ENCODE measurements at regions of chr2 and their contacts with region 1.

Region 1: DNA sequence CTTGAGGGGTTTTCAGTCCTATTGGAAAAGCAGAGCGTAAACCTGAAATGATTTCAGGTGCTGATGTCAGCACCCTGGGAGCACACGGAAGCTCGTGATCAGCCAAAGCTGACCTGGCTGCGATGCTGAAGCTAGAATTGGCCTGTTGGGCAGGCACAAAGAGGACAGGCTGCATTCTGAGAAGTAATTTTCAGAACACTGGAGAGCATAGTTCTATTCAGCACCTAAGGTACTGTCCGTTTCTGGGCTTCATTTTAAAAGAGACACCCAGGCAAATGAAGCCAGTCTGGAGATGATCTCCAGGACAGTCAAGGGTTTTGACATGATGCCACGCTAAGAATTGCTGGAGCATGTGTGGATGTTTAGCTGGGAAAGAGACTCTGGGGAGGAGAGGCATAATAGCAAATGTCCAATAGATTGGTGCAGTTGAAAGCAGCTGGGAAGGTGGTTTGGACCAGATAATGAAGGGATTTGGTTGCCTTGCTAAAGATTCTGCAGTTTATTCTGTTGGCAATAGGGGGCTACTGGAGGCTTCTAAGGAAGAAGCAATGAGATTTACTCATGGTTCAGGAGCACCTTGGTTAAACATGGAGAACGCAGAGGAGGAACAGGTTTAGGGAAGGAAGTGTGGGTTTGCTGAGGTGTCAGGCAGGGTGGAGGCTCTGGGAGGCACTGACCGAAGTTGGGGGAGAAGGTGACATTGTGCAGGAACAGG is 86.6 kb downstream of the ACOXL start:
- DNase-seq: no peak
- ATAC-seq: no peak
- H3K4me3 ChIP-seq: no peak overlapping the region
- H3K27ac ChIP-seq: no peak overlapping the region
- H3K4me1 ChIP-seq: no peaks in the 10 kb centered on the region
- H3K27me3 ChIP-seq: peaks cover 0 to 5% (median 0%) of the 10 kb centered on the region in 9 donors
- CTCF ChIP-seq: no peak
- POLR2A ChIP-seq: no peak

Region 2: DNA sequence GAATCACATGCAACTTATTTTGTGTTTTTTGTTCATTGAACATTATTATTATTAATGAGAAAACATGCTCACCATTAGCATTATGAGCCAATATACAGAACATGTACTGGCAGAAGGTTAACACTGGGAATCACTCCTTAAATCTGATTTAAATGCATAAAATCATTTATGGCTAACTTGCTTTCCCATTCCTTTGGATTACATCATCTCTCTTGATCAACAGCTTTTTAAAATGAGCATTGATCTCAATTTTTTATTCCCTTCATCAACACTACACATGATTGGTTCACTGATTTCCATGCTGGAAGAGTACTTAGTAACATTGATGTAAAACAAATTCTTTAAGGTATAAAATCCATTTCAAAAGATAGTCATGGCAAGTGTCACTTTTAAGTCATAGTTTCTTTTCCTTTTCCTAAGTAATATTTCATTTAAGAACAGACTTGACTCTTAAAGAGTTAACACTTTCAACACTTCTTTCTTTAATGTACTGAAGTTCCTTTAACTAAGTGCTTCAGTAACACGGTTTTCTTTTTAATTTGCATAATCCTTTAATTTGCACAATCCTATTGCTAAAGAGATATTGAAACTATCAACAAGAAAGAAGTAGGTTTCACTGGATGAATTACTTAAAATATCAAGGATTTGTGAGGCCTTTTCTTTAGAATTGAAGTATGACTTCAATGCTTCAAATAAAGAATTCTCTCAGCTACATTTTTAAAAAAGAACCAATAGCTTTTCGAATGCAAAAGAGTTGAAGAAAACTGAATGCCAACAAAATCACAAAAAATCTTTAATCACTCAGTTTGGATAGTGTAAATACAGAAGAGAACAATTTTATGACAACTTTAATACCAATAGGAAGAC is 116.2 kb before region 1 on chr2:
- intact Hi-C with region 1: no loop called
- DNase-seq: no peak
- ATAC-seq: no peak
- H3K4me3 ChIP-seq: no peak overlapping the region
- H3K27ac ChIP-seq: no peak overlapping the region
- H3K4me1 ChIP-seq: peaks cover 0 to 3% (median 0%) of the 10 kb centered on the region in 12 donors
- H3K27me3 ChIP-seq: peaks cover 0 to 3% (median 0%) of the 10 kb centered on the region in 9 donors
- CTCF ChIP-seq: no peak
- POLR2A ChIP-seq: no peak

Region 3: GRCh38 chr2:111667542-111668273 is 848.8 kb after region 1 on chr2:
- intact Hi-C with region 1: loop called in 4 of 10 experiments (anchors 5 to 10 kb)
- DNase-seq: peak in 3 of 5 donors; percentile 36 to 50 (median 42)
- ATAC-seq: peak; percentile 81 to 96 (median 92)
- H3K4me3 ChIP-seq: no peak overlapping the region
- H3K27ac ChIP-seq: no peak overlapping the region
- H3K4me1 ChIP-seq: peaks cover 0 to 22% (median 0%) of the 10 kb centered on the region in 12 donors
- H3K27me3 ChIP-seq: no peaks in the 10 kb centered on the region
- CTCF ChIP-seq: peak; percentile 30 to 74 (median 54)
- POLR2A ChIP-seq: no peak

Region 4: DNA sequence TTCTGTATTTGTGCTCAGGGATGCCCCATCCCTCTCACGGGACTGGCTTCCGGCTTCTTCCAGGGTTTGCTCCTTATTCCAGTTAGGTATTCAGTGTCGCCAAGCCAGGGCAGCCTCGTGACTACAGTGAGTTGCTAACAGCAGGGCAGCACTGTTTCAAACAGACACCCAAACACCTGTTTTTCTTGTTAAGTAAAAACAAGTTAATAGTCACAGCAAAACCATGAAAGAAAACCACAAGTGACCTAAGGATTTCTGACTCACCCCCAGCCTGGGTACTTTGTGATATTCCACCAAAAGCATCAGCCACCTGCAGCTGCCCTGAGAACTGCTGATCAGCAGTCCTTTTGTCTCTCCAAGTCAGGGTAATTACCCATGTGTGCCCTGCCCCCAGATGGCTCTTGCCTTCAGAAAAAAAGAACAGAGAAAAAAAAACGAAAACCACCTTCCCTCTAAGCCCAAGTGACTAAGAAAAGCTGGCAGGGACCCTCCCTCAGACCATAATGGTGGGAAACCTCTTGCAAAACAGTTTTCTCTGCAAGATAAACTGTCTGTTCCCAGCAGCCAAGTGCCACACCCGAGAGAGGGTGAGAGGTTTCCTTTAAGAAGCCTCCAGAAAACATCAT is 886.9 kb after region 1 on chr2:
- intact Hi-C with region 1: loop called in 2 of 10 experiments (anchors 10 kb)
- DNase-seq: no peak
- ATAC-seq: peak in 2 of 4 donors; percentile 23 to 45
- H3K4me3 ChIP-seq: no peak overlapping the region
- H3K27ac ChIP-seq: no peak overlapping the region
- H3K4me1 ChIP-seq: peaks cover 0 to 30% (median 9%) of the 10 kb centered on the region in 12 donors
- H3K27me3 ChIP-seq: no peaks in the 10 kb centered on the region
- CTCF ChIP-seq: no peak
- POLR2A ChIP-seq: no peak